Right lobe of liver (tissue), 6 donors: ENCODE measurements at regions of chr11 and their contacts with region 1.

Region 1: GRCh38 chr11:101848262-101848661 is 66.5 kb upstream of the CEP126 start:
- DNase-seq: no peak
- ATAC-seq: no peak
- H3K4me3 ChIP-seq: no peak overlapping the region
- H3K27ac ChIP-seq: no peak overlapping the region
- H3K4me1 ChIP-seq: no peaks in the 10 kb centered on the region
- H3K27me3 ChIP-seq: no peaks in the 10 kb centered on the region
- CTCF ChIP-seq: peak; percentile 36 to 57 (median 44)
- POLR2A ChIP-seq: no peak

Region 2: DNA sequence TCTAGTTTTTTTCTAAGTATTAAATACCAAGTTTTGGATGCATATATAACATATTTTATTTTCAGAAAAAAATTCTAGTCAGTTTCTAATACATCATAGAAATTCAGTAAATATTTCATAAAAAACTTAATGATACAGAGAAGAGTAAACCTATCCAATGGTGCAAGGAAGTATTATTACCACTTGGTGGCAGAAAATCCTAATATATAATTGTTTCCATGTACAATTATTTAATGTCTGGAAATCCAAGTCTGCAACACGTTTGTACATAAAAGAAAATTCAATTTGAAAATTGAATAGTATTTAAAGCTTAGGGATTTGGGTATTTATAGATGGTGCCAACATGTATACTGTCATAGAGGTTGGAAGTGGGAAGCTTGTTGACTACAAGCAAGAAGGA is 391.4 kb before region 1 on chr11:
- intact Hi-C with region 1: loop called in 1 of 2 experiments (anchors 10 kb)
- DNase-seq: no peak
- ATAC-seq: peak in 1 of 4 donors; percentile 56
- H3K4me3 ChIP-seq: no peak overlapping the region
- H3K27ac ChIP-seq: no peak overlapping the region
- H3K4me1 ChIP-seq: no peaks in the 10 kb centered on the region
- H3K27me3 ChIP-seq: no peaks in the 10 kb centered on the region
- CTCF ChIP-seq: peak; percentile 21 to 48 (median 37)
- POLR2A ChIP-seq: no peak